ENCODE measurements at regions of chr6 and their contacts with region 1.

Region 1: DNA sequence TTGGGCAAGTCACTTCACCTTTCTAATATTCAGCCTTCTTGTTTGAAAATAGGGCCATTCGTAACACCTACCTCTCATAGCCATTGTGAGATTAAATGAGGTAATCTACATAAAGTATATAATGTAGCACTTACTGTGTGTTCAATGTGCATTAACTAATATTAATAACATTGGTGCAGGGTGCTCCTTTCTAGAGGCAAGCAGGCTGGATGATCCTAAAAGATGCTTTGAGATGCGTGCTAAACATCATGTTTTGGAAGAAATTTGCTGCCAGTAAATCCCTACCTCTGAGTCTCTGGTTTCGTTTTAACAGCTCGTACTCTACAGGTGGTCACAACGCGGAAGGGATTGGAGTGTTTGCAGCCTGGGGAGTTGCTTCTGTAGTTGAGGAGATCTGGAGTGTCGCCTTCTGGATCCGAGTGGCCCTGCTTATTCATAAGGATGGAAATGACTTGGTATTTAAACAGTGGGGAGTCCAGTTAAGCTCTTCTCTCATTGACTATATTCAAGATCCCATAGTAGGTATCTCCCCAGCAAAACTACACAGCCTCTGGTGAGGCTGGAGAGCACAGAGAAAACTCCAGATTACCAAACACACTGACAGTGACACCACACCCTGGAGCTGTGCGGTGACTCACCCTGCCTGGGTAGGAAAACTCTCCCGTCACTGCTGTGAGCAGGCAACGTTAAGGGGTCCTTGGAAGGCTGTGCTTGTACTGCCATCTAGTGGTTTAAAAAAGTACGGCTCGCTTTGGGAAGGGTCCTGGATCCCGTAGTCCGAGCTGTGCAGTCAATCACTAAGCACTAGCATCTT is 107.9 kb downstream of the MAP3K7 start:
- DNase-seq: peak; percentile 49
- CTCF ChIP-seq: peak; percentile 80

Region 2: DNA sequence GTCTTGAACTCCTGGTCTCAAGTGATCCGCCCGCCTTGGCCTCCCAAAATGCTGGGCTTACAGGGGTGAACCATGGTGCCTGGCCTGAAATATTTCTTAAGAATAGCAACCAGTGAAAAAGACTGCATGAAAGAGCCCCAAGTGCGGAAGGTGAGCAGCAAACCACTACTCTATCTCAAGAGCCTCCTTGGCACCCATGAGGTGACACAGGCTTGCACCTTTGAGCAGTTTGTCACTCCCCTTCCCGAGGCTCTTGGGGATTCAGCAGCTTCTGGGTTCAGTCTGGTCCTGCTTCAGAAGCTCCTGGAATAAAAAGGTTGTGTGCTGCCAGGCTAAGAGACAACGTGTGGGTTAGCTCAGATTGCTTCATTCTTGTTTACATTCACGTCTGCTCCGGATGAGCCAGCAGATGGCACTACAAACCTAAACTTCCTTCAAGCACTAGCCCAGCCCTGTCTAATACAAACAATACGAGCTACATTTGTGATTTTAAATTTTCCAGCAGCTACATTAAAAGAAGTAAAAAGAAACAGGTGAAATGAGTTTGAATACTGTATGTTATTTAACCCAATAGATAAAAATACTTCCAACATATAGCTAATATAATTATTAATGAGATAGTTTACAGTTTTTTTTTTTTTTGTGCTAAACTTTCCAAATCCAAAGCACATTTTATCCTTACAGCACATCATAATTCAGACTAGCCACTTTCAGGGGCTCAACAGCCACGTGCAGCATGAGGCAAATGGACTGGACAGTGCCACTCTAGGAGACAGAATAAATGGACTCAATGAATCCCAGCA is 538.6 kb before region 1 on chr6:
- in situ Hi-C with region 1: loop called (anchors 5 kb)
- DNase-seq: peak; percentile 74
- CTCF ChIP-seq: peak; percentile 66

Region 3: DNA sequence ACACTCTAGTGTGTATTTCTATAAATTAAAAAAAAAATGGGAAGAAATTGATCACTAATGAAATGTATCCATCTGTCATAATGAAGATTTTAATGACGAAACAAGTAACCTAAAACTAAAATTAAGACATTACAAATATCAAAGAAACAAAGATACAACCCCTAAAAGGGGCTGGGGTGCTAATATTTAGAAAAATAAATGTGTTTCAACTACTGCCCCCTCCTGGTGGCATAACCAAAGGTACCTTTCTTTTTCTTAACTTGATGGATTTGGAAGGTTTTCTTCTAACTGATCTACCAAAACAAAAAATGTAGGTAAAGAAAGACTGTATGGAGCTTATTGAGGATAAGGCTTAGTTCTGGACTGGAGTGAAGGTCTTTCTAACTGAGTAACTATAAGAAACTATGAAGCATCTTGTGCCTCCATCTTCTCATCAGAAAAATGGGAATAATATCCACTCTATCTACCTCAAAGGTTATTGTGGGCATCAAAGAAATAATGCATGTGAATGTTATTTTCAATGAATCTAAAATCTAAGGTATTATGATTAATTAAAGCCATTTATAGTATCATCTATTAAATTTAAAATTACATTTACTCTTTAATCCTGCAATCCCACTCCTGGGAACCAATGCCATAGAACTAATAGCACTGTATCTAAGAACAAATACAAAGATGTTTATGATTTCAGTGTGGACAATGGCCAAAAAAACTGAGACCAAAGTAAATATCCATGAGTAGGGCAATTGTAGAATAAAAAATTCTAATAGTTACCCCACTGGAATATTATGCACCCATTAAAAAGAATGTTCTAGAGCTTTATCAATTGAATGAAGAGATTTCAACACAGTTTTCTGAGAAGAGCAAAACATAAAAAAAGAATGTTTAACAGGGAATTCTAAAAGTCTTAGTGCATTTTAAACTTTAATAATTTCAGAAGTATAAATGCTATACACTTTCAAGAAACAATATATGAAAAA is 299.5 kb before region 1 on chr6:
- in situ Hi-C with region 1: no loop called
- DNase-seq: no peak
- CTCF ChIP-seq: no peak

Region 4: DNA sequence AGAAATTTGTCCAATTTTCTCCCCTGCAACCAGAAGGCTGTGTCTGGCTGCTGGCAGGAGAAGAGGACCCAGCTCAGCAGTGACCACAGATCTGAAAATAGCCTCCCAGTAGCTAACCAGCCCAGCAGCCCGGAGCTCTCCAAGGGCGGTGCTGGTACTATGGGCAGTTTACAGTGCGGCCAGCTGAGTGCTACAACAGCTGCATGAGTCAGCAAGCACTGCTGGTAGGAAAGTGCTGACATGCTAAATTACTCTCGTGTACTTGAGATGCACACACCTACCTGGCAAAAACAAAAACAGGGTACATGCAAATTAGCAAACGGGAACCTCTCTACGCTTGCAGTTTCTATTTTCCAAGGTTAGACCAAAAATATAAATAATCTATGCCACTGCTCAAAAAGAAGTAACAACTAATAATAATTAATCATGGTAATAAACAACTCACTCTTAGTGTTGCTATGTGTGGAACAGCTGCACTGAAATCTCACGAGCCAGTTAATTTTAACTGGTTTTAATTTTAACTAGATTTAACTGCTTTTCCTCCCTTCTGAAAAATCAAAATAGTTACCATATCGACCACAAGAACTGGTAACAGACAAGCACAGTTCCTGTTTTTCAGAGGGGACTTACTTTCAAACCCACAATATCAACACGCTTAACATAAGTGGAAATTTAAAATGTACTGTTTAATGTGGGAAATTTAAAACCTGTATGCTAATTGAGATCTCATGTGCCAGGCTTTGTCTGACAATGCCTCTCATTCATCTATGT is 193.2 kb before region 1 on chr6:
- in situ Hi-C with region 1: loop called (anchors 10 kb)
- DNase-seq: peak; percentile 12
- CTCF ChIP-seq: no peak

Measured in GM13976 (cell line).